Natural killer cell (primary cell): ENCODE measurements at regions of chr9 and their contacts with region 1.

Region 1: DNA sequence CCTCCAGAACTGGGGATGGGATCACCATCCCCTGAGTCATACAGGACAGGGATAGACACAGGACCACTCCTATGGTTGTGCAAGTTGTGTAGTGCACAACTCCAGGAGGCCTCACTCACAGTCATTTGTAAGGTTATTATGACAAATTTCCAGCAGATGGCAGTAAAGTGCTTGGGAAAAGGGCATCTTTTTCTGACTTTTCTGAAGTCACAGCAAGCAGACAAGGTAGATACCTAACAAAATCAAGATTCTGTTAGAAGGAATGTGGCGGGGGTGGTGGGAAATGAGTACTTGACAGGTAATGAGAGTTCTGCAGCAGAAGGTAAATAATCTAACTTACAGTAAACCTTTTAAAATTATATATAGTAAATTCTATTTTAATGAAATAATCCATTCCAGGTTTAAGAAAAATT is 16.7 kb upstream of the KIF27 start:
- DNase-seq: peak in 1 of 2 donors; percentile 83
- ATAC-seq: peak; percentile 68 to 81 (median 78)
- H3K4me3 ChIP-seq: no peak overlapping the region
- H3K4me3 Mint-ChIP-seq: no peak overlapping the region
- H3K27ac ChIP-seq: no peak overlapping the region
- H3K27ac Mint-ChIP-seq: no peak overlapping the region
- H3K4me1 ChIP-seq: no peaks in the 10 kb centered on the region
- H3K4me1 Mint-ChIP-seq: no peaks in the 10 kb centered on the region
- H3K27me3 ChIP-seq: no peaks in the 10 kb centered on the region
- H3K27me3 Mint-ChIP-seq: no peaks in the 10 kb centered on the region
- CTCF ChIP-seq: peak; percentile 86

Region 2: GRCh38 chr9:84173404-84173704 is 235.4 kb after region 1 on chr9:
- intact Hi-C with region 1: loop called (anchors 1 kb)
- DNase-seq: no peak
- ATAC-seq: no peak
- H3K4me3 ChIP-seq: no peak overlapping the region
- H3K4me3 Mint-ChIP-seq: no peak overlapping the region
- H3K27ac ChIP-seq: no peak overlapping the region
- H3K27ac Mint-ChIP-seq: no peak overlapping the region
- H3K4me1 ChIP-seq: no peaks in the 10 kb centered on the region
- H3K4me1 Mint-ChIP-seq: peaks cover 0 to 6% of the 10 kb centered on the region in 2 donors
- H3K27me3 ChIP-seq: no peaks in the 10 kb centered on the region
- H3K27me3 Mint-ChIP-seq: peaks cover 5 to 12% of the 10 kb centered on the region in 2 donors
- CTCF ChIP-seq: peak; percentile 41

Region 3: GRCh38 chr9:84261082-84261746 is 323.3 kb after region 1 on chr9:
- intact Hi-C with region 1: loop called (anchors 1 kb)
- DNase-seq: peak; percentile 31 to 70
- ATAC-seq: peak; percentile 63 to 78 (median 68)
- H3K4me3 ChIP-seq: no peak overlapping the region
- H3K4me3 Mint-ChIP-seq: no peak overlapping the region
- H3K27ac ChIP-seq: no peak overlapping the region
- H3K27ac Mint-ChIP-seq: no peak overlapping the region
- H3K4me1 ChIP-seq: peaks cover 3% of the 10 kb centered on the region
- H3K4me1 Mint-ChIP-seq: peaks cover 8 to 9% of the 10 kb centered on the region in 2 donors
- H3K27me3 ChIP-seq: no peaks in the 10 kb centered on the region
- H3K27me3 Mint-ChIP-seq: peaks cover 10 to 24% of the 10 kb centered on the region in 2 donors
- CTCF ChIP-seq: peak; percentile 75

Region 4: DNA sequence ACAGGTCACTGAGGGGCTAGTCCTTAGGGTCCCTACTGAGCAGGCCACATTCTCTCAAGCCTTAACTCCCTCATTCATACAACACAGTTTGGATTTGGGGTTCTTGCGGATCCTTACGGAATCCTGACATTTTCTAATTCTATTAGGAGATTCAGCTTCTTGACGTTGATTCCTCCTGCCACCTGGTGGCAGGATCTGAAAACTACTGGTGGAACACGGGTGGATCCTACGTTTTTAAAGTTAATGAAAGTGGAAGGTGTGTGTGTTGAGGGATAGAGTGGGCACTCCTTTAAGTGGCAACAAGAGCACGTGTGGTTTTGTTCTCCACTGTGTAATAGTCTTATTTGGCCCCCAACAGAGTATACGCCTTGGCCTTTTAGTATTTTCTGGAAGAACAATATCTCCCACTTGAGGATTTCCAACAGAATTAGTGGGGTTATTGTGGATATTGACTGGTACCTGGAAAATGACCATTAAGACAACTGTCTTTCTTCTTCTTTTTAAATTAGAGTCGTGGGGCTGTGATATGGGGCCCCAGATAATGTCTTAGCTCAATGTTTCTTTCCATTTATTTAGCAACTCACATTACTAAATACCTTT is 377.5 kb after region 1 on chr9:
- intact Hi-C with region 1: loop called (anchors 1 kb)
- DNase-seq: peak; percentile 30 to 75
- ATAC-seq: peak; percentile 57 to 76 (median 75)
- H3K4me3 ChIP-seq: no peak overlapping the region
- H3K4me3 Mint-ChIP-seq: no peak overlapping the region
- H3K27ac ChIP-seq: no peak overlapping the region
- H3K27ac Mint-ChIP-seq: peak overlapping the region in 1 of 2 donors; percentile 49
- H3K4me1 ChIP-seq: peaks cover 14% of the 10 kb centered on the region
- H3K4me1 Mint-ChIP-seq: peaks cover 6 to 27% of the 10 kb centered on the region in 2 donors
- H3K27me3 ChIP-seq: no peaks in the 10 kb centered on the region
- H3K27me3 Mint-ChIP-seq: no peaks in the 10 kb centered on the region
- CTCF ChIP-seq: peak; percentile 87

Region 5: GRCh38 chr9:84419031-84419602 is 481.2 kb after region 1 on chr9:
- intact Hi-C with region 1: loop called (anchors 5 kb)
- DNase-seq: no peak
- ATAC-seq: peak in 2 of 3 donors; percentile 48 to 65
- H3K4me3 ChIP-seq: no peak overlapping the region
- H3K4me3 Mint-ChIP-seq: no peak overlapping the region
- H3K27ac ChIP-seq: no peak overlapping the region
- H3K27ac Mint-ChIP-seq: peak overlapping the region in 1 of 2 donors; percentile 59
- H3K4me1 ChIP-seq: peaks cover 4% of the 10 kb centered on the region
- H3K4me1 Mint-ChIP-seq: peaks cover 9 to 17% of the 10 kb centered on the region in 2 donors
- H3K27me3 ChIP-seq: no peaks in the 10 kb centered on the region
- H3K27me3 Mint-ChIP-seq: peaks cover 0 to 4% of the 10 kb centered on the region in 2 donors
- CTCF ChIP-seq: peak; percentile 28